PC-9 (cell line): ENCODE measurements at regions of chr16 and their contacts with region 1.

Region 1: GRCh38 chr16:1054660-1055556 is 17.6 kb upstream of the SSTR5 start:
- DNase-seq: peak in 1 of 2 experiments; percentile 69
- H3K4me3 ChIP-seq: no peak overlapping the region
- H3K27ac ChIP-seq: no peak overlapping the region
- H3K4me1 ChIP-seq: no peaks in the 10 kb centered on the region
- H3K27me3 ChIP-seq: peaks cover 54% of the 10 kb centered on the region
- CTCF ChIP-seq: peak; percentile 90

Region 2: DNA sequence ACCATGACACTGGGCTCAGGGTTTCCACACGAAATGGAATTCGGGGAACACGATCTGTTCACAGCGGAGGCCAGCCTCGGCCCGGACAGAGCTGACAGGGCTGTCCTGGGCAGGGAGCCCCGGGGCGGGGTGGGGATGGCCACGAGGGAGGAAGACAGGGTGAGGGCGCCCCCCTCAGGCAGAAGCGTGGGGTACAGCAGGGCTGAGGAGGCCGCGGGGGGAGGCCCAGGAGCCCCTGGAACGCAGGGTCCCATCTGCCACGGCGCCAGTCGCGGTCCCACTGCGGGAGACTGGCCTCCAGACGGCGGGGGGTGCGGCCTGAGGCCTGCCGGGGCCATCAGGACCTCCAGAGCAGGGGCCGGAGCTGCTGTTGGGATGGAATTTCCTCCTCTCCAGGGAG is 160.1 kb before region 1 on chr16:
- CTCF ChIA-PET with region 1: no interaction called
- POLR2A ChIA-PET with region 1: no interaction called
- intact Hi-C with region 1: loop called (anchors 5 kb)
- DNase-seq: no peak
- H3K4me3 ChIP-seq: no peak overlapping the region
- H3K27ac ChIP-seq: no peak overlapping the region
- H3K4me1 ChIP-seq: no peaks in the 10 kb centered on the region
- H3K27me3 ChIP-seq: no peaks in the 10 kb centered on the region
- CTCF ChIP-seq: 0 out of 2 replicates have a peak, but pooled peaks have one; percentile 27

Region 3: DNA sequence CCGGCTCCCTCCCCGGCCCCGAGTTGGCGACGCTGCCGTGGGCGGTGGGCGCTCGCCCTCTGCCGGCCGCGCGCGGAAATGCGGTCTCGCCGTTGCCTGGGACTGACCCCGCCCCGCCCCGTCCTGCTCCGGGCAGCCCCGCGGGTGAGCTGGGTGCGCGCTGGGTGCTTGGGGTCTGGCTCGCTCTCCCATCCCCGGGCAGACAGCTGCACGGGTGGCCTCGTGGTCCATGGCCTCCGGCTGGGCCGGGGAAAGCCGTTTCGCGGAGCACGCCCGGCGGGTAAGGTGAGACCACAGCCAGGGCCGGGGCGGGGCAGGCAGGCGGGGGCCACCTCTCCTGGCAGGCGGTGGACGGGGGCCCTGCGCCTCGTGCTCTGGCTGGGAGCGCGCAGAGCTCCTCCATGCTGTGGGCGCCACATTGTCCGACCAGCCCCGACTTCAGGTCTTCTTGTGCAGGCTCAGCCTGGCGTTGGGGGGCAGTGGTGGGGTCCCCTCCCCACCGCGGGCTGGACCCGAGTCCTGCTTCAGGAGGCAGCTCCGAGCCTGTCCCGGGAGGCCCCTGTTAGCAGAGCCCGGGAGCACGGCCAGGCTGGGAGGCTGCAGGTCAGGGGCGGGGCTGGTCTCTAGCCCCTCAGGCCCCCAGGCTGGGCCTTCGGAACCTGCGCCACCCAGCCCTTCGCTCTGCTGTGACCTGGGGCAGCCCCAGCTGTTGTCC is 48.2 kb after region 1 on chr16:
- CTCF ChIA-PET with region 1: interaction called, 5 read pairs
- POLR2A ChIA-PET with region 1: no interaction called
- intact Hi-C with region 1: loop called (anchors 2 kb)
- DNase-seq: peak in 1 of 2 experiments; percentile 79
- H3K4me3 ChIP-seq: no peak overlapping the region
- H3K27ac ChIP-seq: no peak overlapping the region
- H3K4me1 ChIP-seq: no peaks in the 10 kb centered on the region
- H3K27me3 ChIP-seq: peaks cover 49% of the 10 kb centered on the region
- CTCF ChIP-seq: peak; percentile 67

Region 4: GRCh38 chr16:1194665-1195392 is 139.9 kb after region 1 on chr16:
- CTCF ChIA-PET with region 1: no interaction called
- POLR2A ChIA-PET with region 1: no interaction called
- intact Hi-C with region 1: no loop called
- DNase-seq: no peak
- H3K4me3 ChIP-seq: no peak overlapping the region
- H3K27ac ChIP-seq: no peak overlapping the region
- H3K4me1 ChIP-seq: no peaks in the 10 kb centered on the region
- H3K27me3 ChIP-seq: 0 out of 2 replicates have a peak, but pooled peaks cover 6% of the 10 kb centered on the region
- CTCF ChIP-seq: peak; percentile 81